IMR-90 (cell line): ENCODE measurements at regions of chr5 and their contacts with region 1.

Region 1: DNA sequence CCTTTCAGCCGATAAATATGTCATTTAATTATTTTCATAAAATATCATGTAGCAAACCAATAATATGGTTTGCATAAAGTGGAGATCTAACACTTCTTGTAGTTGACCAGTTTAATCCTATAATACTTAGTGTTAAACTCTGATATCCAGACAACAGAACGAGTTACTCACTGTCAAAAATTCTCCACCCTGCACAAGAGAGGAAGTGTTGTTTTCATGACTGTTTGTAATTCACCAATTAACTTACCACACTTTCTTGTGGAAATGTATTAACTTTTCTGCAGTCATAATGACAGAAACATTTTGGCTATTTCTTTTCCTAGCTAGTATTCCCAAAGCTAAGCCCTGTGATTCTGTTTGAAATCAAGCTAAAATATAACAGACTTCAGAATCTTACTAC is 555.3 kb upstream of the FTMT start:
- DNase-seq: no peak
- ATAC-seq: no peak
- H3K4me3 ChIP-seq: no peak overlapping the region
- H3K27ac ChIP-seq: no peak overlapping the region
- H3K4me1 ChIP-seq: no peaks in the 10 kb centered on the region
- H3K27me3 ChIP-seq: no peaks in the 10 kb centered on the region
- CTCF ChIP-seq: no peak
- POLR2A ChIP-seq: no peak
- RAD21 ChIP-seq: no peak

Region 2: GRCh38 chr5:120866997-120867396 is 429.4 kb before region 1 on chr5:
- CTCF ChIA-PET with region 1: no interaction called
- POLR2A ChIA-PET with region 1: no interaction called
- dilution Hi-C with region 1: no loop called
- in situ Hi-C with region 1: no loop called
- intact Hi-C with region 1: loop called (anchors 1 kb)
- DNase-seq: no peak
- ATAC-seq: no peak
- H3K4me3 ChIP-seq: no peak overlapping the region
- H3K27ac ChIP-seq: no peak overlapping the region
- H3K4me1 ChIP-seq: no peaks in the 10 kb centered on the region
- H3K27me3 ChIP-seq: no peaks in the 10 kb centered on the region
- CTCF ChIP-seq: no peak
- POLR2A ChIP-seq: no peak
- RAD21 ChIP-seq: no peak

Region 3: DNA sequence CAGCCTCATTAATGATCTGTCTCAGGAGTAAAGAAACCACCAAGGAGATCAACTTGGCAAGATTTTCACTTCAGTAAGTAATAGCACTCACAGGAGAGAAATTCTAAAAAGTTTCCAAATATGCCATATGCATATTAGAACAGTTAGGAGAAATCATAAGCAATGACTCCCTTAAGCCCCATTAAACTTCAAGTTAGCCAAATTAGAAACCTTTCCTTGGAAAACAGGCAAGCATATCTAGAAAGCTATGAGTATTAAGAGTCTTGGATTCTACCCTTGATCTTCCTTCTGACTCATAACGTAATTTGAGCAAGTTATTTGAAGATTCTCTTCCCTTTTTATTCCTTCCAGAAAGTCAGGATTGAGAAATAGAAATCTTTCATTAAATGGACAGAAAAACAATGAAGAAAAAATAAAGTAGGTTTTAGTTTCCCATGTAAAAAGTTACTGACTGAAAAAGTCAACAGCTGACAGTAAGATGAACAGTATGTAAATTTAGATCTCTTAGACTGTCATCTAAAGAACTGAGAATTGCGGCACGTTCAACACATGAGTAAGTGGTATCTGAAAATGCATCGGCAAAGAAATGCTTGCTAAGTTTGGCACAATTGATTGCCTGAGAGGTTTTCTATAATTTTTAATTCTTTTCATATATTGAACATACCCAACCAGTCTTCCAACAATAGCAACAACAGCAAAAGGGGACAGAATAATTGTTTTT is 10.4 kb before region 1 on chr5:
- CTCF ChIA-PET with region 1: interaction called, 3 read pairs
- POLR2A ChIA-PET with region 1: no interaction called
- dilution Hi-C with region 1: no loop called
- in situ Hi-C with region 1: no loop called
- intact Hi-C with region 1: loop called (anchors 1 kb)
- DNase-seq: peak; percentile 38
- ATAC-seq: peak; percentile 21; the same call in 1 of the 2 replicates
- H3K4me3 ChIP-seq: no peak overlapping the region
- H3K27ac ChIP-seq: no peak overlapping the region
- H3K4me1 ChIP-seq: no peaks in the 10 kb centered on the region
- H3K27me3 ChIP-seq: no peaks in the 10 kb centered on the region
- CTCF ChIP-seq: no peak
- POLR2A ChIP-seq: no peak
- RAD21 ChIP-seq: no peak

Region 4: DNA sequence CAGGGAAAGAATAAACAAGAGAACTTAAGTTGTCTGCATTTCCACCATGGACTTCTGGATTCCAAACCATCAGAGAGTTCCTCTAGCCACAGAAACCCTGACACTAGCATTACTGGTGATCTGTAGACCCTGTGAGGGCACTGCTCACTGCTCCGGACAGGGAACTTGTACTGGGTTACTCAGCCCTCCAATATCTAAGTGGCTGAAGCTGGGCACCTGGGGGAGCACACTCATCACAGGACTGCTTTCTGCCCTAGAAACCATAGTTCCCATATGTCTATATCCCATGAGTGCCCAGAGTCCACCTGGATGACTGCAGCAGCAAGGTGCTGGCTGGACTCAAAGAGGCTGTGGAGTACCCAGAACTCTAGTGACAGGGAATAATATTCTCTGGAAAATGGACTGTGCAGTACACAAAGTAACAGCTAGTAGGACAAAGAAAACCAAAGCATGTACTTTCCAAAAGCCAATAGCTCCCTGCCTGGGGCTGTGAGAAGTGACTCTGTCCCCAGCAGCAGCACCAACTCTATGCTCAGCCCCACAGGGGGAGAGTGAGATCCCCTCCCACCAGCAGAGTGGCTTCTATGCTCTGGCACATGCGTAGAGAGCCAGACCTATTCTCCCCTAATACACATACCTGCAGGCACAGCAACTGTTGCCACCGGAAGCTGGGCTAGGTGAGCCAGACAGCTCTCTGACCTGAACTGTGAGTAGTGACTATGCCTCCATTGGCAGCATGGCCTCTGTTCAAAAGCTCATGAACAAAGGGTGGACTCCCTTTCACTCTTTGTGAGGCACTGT is 82.4 kb after region 1 on chr5:
- CTCF ChIA-PET with region 1: no interaction called
- POLR2A ChIA-PET with region 1: no interaction called
- dilution Hi-C with region 1: no loop called
- in situ Hi-C with region 1: no loop called
- intact Hi-C with region 1: no loop called
- DNase-seq: no peak
- ATAC-seq: no peak
- H3K4me3 ChIP-seq: no peak overlapping the region
- H3K27ac ChIP-seq: no peak overlapping the region
- H3K4me1 ChIP-seq: no peaks in the 10 kb centered on the region
- H3K27me3 ChIP-seq: no peaks in the 10 kb centered on the region
- CTCF ChIP-seq: no peak
- POLR2A ChIP-seq: no peak
- RAD21 ChIP-seq: no peak